Breast epithelium (tissue), 4 donors: ENCODE measurements at regions of chr6 and their contacts with region 1.

Region 1: GRCh38 chr6:89242574-89243330 is 25.6 kb upstream of the GABRR1 start:
- DNase-seq: no peak
- H3K4me3 ChIP-seq: no peak overlapping the region
- H3K27ac ChIP-seq: no peak overlapping the region
- H3K4me1 ChIP-seq: no peaks in the 10 kb centered on the region
- H3K27me3 ChIP-seq: no peaks in the 10 kb centered on the region
- CTCF ChIP-seq: peak in 1 of 3 donors; percentile 60
- POLR2A ChIP-seq: no peak

Region 2: DNA sequence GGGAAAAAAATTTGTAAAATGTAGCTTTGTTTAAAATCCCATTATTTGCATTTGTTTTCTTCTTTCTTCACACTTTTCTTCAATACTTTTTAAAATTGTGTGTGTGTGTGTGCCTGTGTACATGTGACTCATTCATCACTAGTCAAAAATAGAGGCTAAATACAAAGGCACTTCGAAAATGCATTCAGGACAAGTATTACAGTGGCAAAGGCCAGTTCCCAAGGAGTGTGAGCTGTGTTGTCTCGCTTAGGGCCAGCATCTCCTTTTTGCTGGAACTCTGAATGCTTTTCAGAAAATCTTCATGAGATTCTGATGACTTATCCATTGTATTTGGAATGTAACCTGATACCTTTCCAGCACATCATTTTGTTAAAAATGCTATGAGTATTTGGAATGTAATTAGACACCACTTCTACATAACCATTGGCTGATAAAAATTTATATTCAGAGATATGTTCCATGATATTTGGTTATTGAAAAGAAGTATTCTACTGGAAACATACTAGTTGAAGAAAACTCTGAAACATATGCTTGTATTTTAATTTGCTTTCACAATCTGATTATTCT is 788.0 kb before region 1 on chr6:
- intact Hi-C with region 1: no loop called
- DNase-seq: no peak
- H3K4me3 ChIP-seq: no peak overlapping the region
- H3K27ac ChIP-seq: no peak overlapping the region
- H3K4me1 ChIP-seq: no peaks in the 10 kb centered on the region
- H3K27me3 ChIP-seq: no peaks in the 10 kb centered on the region
- CTCF ChIP-seq: no peak
- POLR2A ChIP-seq: no peak

Region 3: DNA sequence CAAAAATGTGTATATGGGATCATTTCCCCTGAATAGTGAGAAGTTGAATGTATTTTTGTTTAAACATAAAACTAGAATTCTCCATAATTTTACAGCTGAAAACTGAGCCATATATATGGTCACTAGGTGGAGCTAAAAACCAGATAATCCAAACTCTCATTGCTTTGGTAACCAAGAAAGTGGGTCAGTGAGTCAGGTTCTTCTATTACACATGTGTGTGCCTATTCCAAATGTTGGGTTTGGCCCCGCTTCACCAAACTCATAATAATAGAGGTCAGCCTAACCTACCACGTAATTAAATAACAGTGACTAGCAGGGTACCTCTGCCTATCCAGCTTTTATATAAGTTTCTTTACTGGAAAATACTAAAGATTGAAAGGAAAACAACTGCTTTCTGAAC is 260.0 kb before region 1 on chr6:
- intact Hi-C with region 1: loop called (anchors 10 kb)
- DNase-seq: peak in 1 of 2 donors; percentile 78
- H3K4me3 ChIP-seq: peak overlapping the region in 1 of 3 donors; percentile 16
- H3K27ac ChIP-seq: peak overlapping the region in 1 of 2 donors; percentile 37
- H3K4me1 ChIP-seq: no peaks in the 10 kb centered on the region
- H3K27me3 ChIP-seq: no peaks in the 10 kb centered on the region
- CTCF ChIP-seq: peak; percentile 71 to 82 (median 81)
- POLR2A ChIP-seq: no peak